MCF 10A (cell line): ENCODE measurements at regions of chr7 and their contacts with region 1.

Region 1: GRCh38 chr7:56051339-56052191 is at the starts of genes CCT6A and PSPH:
- DNase-seq: peak; percentile 99
- H3K4me3 Mint-ChIP-seq: peak within 1 kb of the TSS; percentile 97
- H3K27ac Mint-ChIP-seq: peak within 1 kb of the TSS; percentile 94
- H3K4me1 Mint-ChIP-seq: peaks cover 10% of the 10 kb centered on the region
- H3K27me3 Mint-ChIP-seq: no peaks in the 10 kb centered on the region
- CTCF ChIP-seq: no peak
- total RNA-seq, gene CCT6A: 208 and 222 TPM in 2 replicates
- total RNA-seq, gene PSPH: 49.4 and 56.6 TPM in 2 replicates

Region 2: DNA sequence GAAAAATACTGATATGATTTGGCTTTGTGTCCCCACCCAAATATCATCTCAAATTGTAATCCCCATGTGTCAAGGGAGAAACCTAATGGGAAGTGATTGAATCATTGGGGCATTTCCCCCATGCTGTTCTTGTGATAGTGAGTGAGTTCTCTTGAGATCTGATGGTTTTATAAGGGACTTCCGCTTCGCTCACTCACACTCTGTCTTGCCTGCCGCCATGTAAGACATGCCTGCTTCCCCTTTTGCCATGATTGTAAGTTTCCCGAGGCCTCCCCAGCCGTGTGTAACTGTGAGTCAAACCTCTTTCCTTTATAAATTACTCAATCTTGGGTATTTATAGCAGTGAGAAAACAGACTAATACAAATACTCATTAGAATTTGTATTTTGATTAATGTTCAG is 105.0 kb before region 1 on chr7:
- CTCF ChIA-PET with region 1: no interaction called
- POLR2A ChIA-PET with region 1: no interaction called
- intact Hi-C with region 1: no loop called
- DNase-seq: no peak
- H3K4me3 Mint-ChIP-seq: no peak overlapping the region
- H3K27ac Mint-ChIP-seq: no peak overlapping the region
- H3K4me1 Mint-ChIP-seq: no peaks in the 10 kb centered on the region
- H3K27me3 Mint-ChIP-seq: no peaks in the 10 kb centered on the region
- CTCF ChIP-seq: no peak

Region 3: GRCh38 chr7:55977831-55978230 is 73.7 kb before region 1 on chr7:
- CTCF ChIA-PET with region 1: no interaction called
- POLR2A ChIA-PET with region 1: interaction called, 13 read pairs
- intact Hi-C with region 1: no loop called
- DNase-seq: peak; percentile 73
- H3K4me3 Mint-ChIP-seq: peak overlapping the region; percentile 67
- H3K27ac Mint-ChIP-seq: peak overlapping the region; percentile 88
- H3K4me1 Mint-ChIP-seq: peaks cover 19% of the 10 kb centered on the region
- H3K27me3 Mint-ChIP-seq: no peaks in the 10 kb centered on the region
- CTCF ChIP-seq: no peak

Region 4: GRCh38 chr7:56026538-56026937 is 25.0 kb before region 1 on chr7:
- CTCF ChIA-PET with region 1: interaction called, 5 read pairs
- POLR2A ChIA-PET with region 1: interaction called, 11 read pairs
- intact Hi-C with region 1: no loop called
- DNase-seq: peak; percentile 73
- H3K4me3 Mint-ChIP-seq: peak overlapping the region; percentile 26
- H3K27ac Mint-ChIP-seq: peak overlapping the region; percentile 81
- H3K4me1 Mint-ChIP-seq: peaks cover 6% of the 10 kb centered on the region
- H3K27me3 Mint-ChIP-seq: no peaks in the 10 kb centered on the region
- CTCF ChIP-seq: no peak

Region 5: DNA sequence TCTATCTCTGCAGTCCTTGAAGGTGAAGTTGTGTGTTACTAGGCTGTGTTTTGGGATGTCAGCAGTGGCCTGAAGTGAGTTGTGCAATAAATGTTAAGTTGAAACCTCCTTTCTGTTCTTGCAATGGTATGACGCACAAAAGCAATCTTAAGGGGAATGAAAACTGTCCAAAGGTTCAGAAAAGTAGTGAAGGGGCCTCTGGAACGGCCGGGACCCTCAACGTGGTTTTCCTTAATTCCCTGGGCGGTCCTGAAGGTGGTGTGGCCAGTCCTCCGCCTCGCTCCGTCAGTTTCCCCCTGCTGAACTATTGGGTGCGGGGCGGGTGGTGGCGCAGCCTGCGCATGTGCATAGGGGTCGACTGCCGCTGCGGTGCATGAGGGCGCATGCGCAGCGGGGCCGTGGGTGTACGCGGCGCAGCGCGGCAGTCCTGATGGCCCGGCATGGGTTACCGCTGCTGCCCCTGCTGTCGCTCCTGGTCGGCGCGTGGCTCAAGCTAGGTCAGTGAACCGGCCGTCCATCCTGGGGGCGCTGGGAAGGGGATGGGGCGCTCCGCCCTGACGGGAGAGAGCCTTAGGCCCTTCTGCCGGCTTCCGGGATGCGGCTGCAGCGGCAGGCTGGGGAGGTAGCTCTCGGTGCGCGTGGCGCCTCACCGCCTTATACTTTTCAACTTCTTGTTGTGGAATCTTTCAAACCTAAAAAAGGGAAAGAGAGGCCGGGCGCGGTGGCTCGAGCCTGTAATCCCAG is 12.5 kb after region 1 on chr7 and contains the start of gene SUMF2:
- CTCF ChIA-PET with region 1: interaction called, 6 read pairs
- POLR2A ChIA-PET with region 1: interaction called, 116 read pairs
- intact Hi-C with region 1: loop called (anchors 2 kb)
- DNase-seq: peak; percentile 90
- H3K4me3 Mint-ChIP-seq: peak within 1 kb of the TSS; percentile 82
- H3K27ac Mint-ChIP-seq: peak within 1 kb of the TSS; percentile 84
- H3K4me1 Mint-ChIP-seq: peaks cover 30% of the 10 kb centered on the region
- H3K27me3 Mint-ChIP-seq: no peaks in the 10 kb centered on the region
- CTCF ChIP-seq: no peak
- total RNA-seq, gene SUMF2: 142 and 159 TPM in 2 replicates